ENCODE measurements at regions of chr4 and their contacts with region 1.

Region 1: DNA sequence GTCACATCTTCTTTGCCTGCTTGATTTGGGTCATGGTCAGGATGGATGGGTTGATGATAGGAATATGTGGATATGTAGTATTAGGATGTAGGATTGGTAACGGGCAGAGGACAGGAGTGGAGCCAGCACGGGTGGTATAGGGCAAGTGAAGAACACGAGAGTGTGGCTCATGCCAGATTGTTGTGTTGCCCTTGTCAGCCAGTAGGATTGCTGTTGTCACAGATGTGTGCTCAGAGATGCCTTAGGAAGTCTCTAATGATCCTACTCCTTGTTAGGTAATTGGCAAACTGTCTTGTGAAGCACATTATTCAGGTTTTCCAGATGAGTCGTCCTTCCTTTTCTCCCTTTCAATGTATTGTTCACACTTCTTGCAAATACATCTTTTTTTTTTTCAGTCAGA is 5.5 kb downstream of the ATP10D start:
- DNase-seq: peak; percentile 21
- ATAC-seq: peak; percentile 98
- H3K4me3 ChIP-seq: no peak overlapping the region
- H3K27ac ChIP-seq: no peak overlapping the region
- H3K4me1 ChIP-seq: peaks cover 9% of the 10 kb centered on the region
- H3K27me3 ChIP-seq: no peaks in the 10 kb centered on the region; a peak in 1 of 5 replicates
- CTCF ChIP-seq: peak; percentile 28; the same call in 1 of the 2 replicates
- EP300 ChIP-seq: no peak
- POLR2A ChIP-seq: no peak
- RAD21 ChIP-seq: no peak

Region 2: GRCh38 chr4:47562297-47562696 is 71.7 kb after region 1 on chr4:
- CTCF ChIA-PET with region 1: interaction called, 4 read pairs
- POLR2A ChIA-PET with region 1: no interaction called
- in situ Hi-C with region 1: no loop called
- intact Hi-C with region 1: loop called (anchors 1 kb)
- DNase-seq: no peak
- ATAC-seq: no peak
- H3K4me3 ChIP-seq: no peak overlapping the region
- H3K27ac ChIP-seq: no peak overlapping the region
- H3K4me1 ChIP-seq: peaks cover 31% of the 10 kb centered on the region
- H3K27me3 ChIP-seq: no peaks in the 10 kb centered on the region
- CTCF ChIP-seq: no peak
- EP300 ChIP-seq: no peak
- POLR2A ChIP-seq: no peak
- RAD21 ChIP-seq: no peak

Measured in HepG2 (cell line).